Naive thymus-derived CD4-positive, alpha-beta T cell (primary cell): ENCODE measurements at regions of chr6 and their contacts with region 1.

Region 1: DNA sequence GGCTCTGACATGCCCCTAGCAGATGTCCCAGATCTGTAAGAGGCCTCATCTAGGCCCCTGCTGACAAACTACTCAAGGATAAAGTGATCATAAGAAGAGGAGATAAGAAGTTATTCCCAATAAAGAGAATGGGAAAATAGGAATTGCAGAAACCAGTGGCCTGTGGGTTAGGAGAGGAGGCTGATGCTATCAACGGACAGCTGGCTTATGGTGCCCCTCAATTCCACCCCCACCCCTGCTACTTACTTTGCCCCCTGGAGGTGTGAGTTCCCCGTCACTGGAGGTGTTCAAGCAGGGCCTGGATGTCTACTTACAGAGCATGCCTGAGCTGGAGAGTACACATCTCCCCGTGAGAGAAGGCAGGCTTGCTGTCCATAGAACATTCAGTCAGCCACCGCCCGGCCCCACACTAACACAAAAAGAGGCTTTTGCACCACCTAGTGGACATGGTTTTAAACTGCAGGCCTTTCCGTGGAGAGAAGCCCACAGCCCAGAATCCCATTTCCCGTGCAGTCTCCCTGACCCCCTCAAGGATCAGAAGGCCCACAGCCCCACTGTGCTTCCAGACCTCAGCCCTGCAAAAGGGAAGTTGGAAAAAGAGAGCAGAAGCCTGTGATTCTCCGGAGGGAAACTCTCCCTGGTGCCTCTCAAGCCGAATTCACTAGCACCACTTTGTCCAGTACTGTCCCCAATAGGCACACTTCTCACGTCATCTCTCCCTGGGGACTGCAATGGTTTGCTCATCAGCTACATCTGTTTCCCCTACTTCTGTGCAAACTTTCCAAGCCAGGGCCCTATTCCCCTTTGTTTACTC is 23.8 kb upstream of the BNIP5 start:
- DNase-seq: peak; percentile 37 to 74 (median 66)
- ATAC-seq: peak; percentile 95
- H3K4me3 ChIP-seq: no peak overlapping the region
- H3K4me3 Mint-ChIP-seq: no peak overlapping the region
- H3K27ac ChIP-seq: no peak overlapping the region
- H3K27ac Mint-ChIP-seq: peak overlapping the region in 2 of 9 donors; percentile 24 to 55
- H3K4me1 ChIP-seq: peaks cover 4 to 6% of the 10 kb centered on the region in 2 donors
- H3K4me1 Mint-ChIP-seq: peaks cover 0 to 30% (median 4%) of the 10 kb centered on the region in 7 donors
- H3K27me3 ChIP-seq: no peaks in the 10 kb centered on the region
- H3K27me3 Mint-ChIP-seq: peaks cover 0 to 15% (median 4%) of the 10 kb centered on the region in 5 donors

Region 2: GRCh38 chr6:35876902-35877301 is 483.5 kb before region 1 on chr6:
- CTCF ChIA-PET with region 1: no interaction called
- POLR2A ChIA-PET with region 1: no interaction called
- intact Hi-C with region 1: no loop called
- DNase-seq: no peak
- ATAC-seq: no peak
- H3K4me3 ChIP-seq: no peak overlapping the region
- H3K4me3 Mint-ChIP-seq: no peak overlapping the region
- H3K27ac ChIP-seq: no peak overlapping the region
- H3K27ac Mint-ChIP-seq: peak overlapping the region in 1 of 9 donors; percentile 73
- H3K4me1 ChIP-seq: no peaks in the 10 kb centered on the region
- H3K4me1 Mint-ChIP-seq: peaks cover 0 to 8% (median 0%) of the 10 kb centered on the region in 7 donors
- H3K27me3 ChIP-seq: no peaks in the 10 kb centered on the region
- H3K27me3 Mint-ChIP-seq: no peaks in the 10 kb centered on the region

Region 3: DNA sequence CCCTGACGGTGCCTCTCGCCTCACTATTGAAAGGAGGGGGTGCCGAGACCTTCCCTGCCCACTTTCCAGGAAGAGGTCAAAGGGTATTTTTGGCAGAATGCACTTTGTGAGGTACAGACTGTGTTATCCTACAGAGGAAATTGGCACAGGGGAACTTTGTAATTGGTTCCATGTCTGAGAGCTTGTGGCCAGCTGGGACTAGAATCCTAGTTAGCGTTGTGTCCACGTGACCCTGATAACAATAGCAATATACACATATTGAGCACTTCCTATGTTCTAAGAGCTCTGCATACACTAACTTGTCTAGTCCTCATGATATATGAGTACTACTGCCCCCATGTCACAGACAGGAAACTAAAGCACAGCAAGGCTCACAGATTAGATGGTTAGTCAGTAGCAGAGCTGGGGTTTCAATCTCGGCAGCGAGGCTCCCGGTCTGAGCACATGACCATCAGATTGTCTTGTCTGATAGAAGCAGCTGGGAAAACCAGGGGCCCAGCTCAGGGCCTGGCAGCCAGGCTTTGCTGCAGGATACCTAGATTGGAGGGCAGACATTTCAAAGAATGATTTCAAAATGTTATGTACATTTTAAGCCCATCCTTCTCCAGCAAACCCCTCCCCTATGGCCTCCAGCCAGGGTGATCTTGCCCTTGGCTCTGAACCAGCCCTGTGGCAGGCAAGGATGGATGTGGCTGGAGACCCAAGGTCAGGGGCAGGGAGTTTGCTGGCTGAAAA is 228.8 kb before region 1 on chr6:
- CTCF ChIA-PET with region 1: no interaction called
- POLR2A ChIA-PET with region 1: no interaction called
- intact Hi-C with region 1: loop called in 1 of 2 experiments (anchors 2 kb)
- DNase-seq: peak in 7 of 9 donors; percentile 41 to 58 (median 48)
- ATAC-seq: peak; percentile 67
- H3K4me3 ChIP-seq: peak overlapping the region; percentile 72
- H3K4me3 Mint-ChIP-seq: peak overlapping the region; percentile 85 to 92 (median 88)
- H3K27ac ChIP-seq: peak overlapping the region; percentile 87
- H3K27ac Mint-ChIP-seq: peak overlapping the region; percentile 84 to 96 (median 92)
- H3K4me1 ChIP-seq: peaks cover 24 to 25% of the 10 kb centered on the region in 2 donors
- H3K4me1 Mint-ChIP-seq: peaks cover 37 to 55% (median 49%) of the 10 kb centered on the region in 7 donors
- H3K27me3 ChIP-seq: no peaks in the 10 kb centered on the region
- H3K27me3 Mint-ChIP-seq: no peaks in the 10 kb centered on the region

Region 4: DNA sequence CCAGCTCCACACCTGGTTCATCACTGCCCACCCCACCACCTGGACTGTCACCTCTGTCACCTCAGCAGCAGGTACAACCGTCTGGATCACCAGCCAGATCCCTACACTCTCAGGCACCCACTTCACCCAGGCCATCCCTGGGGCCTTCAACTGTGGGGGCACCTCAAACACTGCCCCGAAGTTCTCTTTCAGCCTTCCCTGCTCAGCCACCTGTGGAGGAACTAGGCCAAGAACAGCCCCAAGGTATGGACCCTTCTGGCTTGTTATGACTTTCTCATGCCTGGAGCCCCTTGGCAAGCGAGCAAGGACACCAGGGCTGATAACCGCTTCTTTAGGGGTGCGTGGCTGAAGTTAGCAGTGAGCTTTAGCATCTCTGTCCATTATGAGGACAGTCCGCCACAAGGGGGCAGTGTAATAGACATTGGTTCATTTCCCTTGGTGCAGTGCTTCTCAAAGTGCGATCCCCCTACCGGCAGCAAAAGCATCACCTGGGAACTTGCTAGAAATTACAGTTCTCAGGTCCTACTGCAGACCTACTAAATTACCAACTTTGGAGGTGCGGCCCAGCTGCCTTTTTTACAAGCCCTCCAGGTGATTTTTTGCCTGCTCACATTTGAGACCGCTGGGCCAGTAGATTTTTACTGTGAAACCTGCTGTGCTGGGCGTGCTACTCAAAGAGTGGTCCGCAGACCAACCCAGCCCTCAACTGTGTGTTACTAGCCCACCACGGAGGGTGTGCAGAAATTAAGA is 58.0 kb before region 1 on chr6:
- CTCF ChIA-PET with region 1: interaction called, 5 read pairs
- POLR2A ChIA-PET with region 1: no interaction called
- intact Hi-C with region 1: loop called (anchors 1 kb)
- DNase-seq: peak; percentile 74 to 92 (median 88)
- ATAC-seq: peak; percentile 100
- H3K4me3 ChIP-seq: no peak overlapping the region
- H3K4me3 Mint-ChIP-seq: no peak overlapping the region
- H3K27ac ChIP-seq: no peak overlapping the region
- H3K27ac Mint-ChIP-seq: peak overlapping the region in 4 of 9 donors; percentile 29 to 59 (median 48)
- H3K4me1 ChIP-seq: no peaks in the 10 kb centered on the region
- H3K4me1 Mint-ChIP-seq: peaks cover 0 to 8% (median 6%) of the 10 kb centered on the region in 7 donors
- H3K27me3 ChIP-seq: no peaks in the 10 kb centered on the region
- H3K27me3 Mint-ChIP-seq: peaks cover 0 to 29% (median 5%) of the 10 kb centered on the region in 5 donors

Region 5: DNA sequence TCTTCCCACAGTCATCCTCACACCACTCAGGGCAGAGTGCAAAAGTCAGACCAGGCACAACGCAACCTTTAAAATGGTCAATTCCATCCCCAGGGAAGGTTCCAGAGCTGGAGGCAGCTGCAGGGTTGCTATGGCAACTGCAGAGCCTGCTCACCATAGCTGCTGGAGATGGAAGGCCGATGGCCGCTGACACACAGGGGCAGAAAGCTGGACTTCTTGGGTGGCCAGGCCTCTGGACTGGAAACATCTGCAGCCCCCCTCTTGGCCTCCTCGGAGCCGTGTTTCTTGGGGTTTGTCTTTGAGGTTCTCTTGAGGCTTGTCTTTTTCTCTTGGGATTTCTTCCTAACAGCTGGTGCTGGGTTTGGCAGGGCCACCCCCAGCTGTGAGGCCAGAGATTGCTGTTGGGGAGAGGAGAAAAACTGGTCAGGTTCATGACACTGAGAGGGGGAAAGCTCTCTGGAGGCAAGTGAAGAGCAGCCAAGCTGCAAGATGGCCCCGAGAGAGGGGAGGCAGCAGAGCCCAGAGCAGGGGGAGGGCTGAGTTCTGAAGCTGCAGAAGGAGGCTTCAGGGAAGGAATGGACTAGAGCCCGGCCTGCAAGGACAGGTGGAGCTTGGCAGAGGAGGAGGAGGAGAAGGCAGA is 34.0 kb before region 1 on chr6:
- CTCF ChIA-PET with region 1: no interaction called
- POLR2A ChIA-PET with region 1: no interaction called
- intact Hi-C with region 1: no loop called
- DNase-seq: no peak
- ATAC-seq: no peak
- H3K4me3 ChIP-seq: no peak overlapping the region
- H3K4me3 Mint-ChIP-seq: no peak overlapping the region
- H3K27ac ChIP-seq: no peak overlapping the region
- H3K27ac Mint-ChIP-seq: no peak overlapping the region
- H3K4me1 ChIP-seq: no peaks in the 10 kb centered on the region
- H3K4me1 Mint-ChIP-seq: peaks cover 0 to 3% (median 0%) of the 10 kb centered on the region in 7 donors
- H3K27me3 ChIP-seq: no peaks in the 10 kb centered on the region
- H3K27me3 Mint-ChIP-seq: peaks cover 0 to 21% (median 0%) of the 10 kb centered on the region in 5 donors

Region 6: GRCh38 chr6:36340618-36341454 is 19.6 kb before region 1 on chr6:
- CTCF ChIA-PET with region 1: interaction called, 6 read pairs
- POLR2A ChIA-PET with region 1: interaction called, 7 read pairs
- intact Hi-C with region 1: loop called (anchors 1 kb)
- DNase-seq: peak; percentile 45 to 74 (median 65)
- ATAC-seq: peak; percentile 95
- H3K4me3 ChIP-seq: no peak overlapping the region
- H3K4me3 Mint-ChIP-seq: peak overlapping the region; percentile 38 to 71 (median 64)
- H3K27ac ChIP-seq: no peak overlapping the region
- H3K27ac Mint-ChIP-seq: peak overlapping the region in 4 of 9 donors; percentile 4 to 51 (median 39)
- H3K4me1 ChIP-seq: peaks cover 4 to 5% of the 10 kb centered on the region in 2 donors
- H3K4me1 Mint-ChIP-seq: peaks cover 5 to 25% (median 13%) of the 10 kb centered on the region in 7 donors
- H3K27me3 ChIP-seq: no peaks in the 10 kb centered on the region
- H3K27me3 Mint-ChIP-seq: peaks cover 7 to 44% (median 12%) of the 10 kb centered on the region in 5 donors

Region 7: GRCh38 chr6:36441307-36441894 is 81.0 kb after region 1 on chr6:
- CTCF ChIA-PET with region 1: no interaction called
- POLR2A ChIA-PET with region 1: no interaction called
- intact Hi-C with region 1: no loop called
- DNase-seq: peak; percentile 41 to 86 (median 64)
- ATAC-seq: peak; percentile 80
- H3K4me3 ChIP-seq: no peak overlapping the region
- H3K4me3 Mint-ChIP-seq: peak overlapping the region; percentile 51 to 85 (median 67)
- H3K27ac ChIP-seq: peak overlapping the region; percentile 97
- H3K27ac Mint-ChIP-seq: peak overlapping the region; percentile 84 to 95 (median 91)
- H3K4me1 ChIP-seq: peaks cover 20 to 31% of the 10 kb centered on the region in 2 donors
- H3K4me1 Mint-ChIP-seq: peaks cover 28 to 45% (median 41%) of the 10 kb centered on the region in 7 donors
- H3K27me3 ChIP-seq: no peaks in the 10 kb centered on the region
- H3K27me3 Mint-ChIP-seq: no peaks in the 10 kb centered on the region

Region 8: GRCh38 chr6:36576561-36576960 is 216.1 kb after region 1 on chr6:
- CTCF ChIA-PET with region 1: no interaction called
- POLR2A ChIA-PET with region 1: no interaction called
- intact Hi-C with region 1: loop called in 1 of 2 experiments (anchors 1 kb)
- DNase-seq: no peak
- ATAC-seq: no peak
- H3K4me3 ChIP-seq: no peak overlapping the region
- H3K4me3 Mint-ChIP-seq: no peak overlapping the region
- H3K27ac ChIP-seq: no peak overlapping the region
- H3K27ac Mint-ChIP-seq: no peak overlapping the region
- H3K4me1 ChIP-seq: no peaks in the 10 kb centered on the region
- H3K4me1 Mint-ChIP-seq: peaks cover 0 to 16% (median 14%) of the 10 kb centered on the region in 7 donors
- H3K27me3 ChIP-seq: no peaks in the 10 kb centered on the region
- H3K27me3 Mint-ChIP-seq: no peaks in the 10 kb centered on the region